IMR-90 (cell line): ENCODE measurements at regions of chr19 and their contacts with region 1.

Region 1: GRCh38 chr19:6737284-6738046 is at the start of gene GPR108:
- DNase-seq: peak; percentile 100
- ATAC-seq: peak; percentile 75
- H3K4me3 ChIP-seq: peak within 1 kb of the TSS; percentile 58
- H3K27ac ChIP-seq: peak within 1 kb of the TSS; percentile 89
- H3K4me1 ChIP-seq: peaks cover 13% of the 10 kb centered on the region
- H3K27me3 ChIP-seq: no peaks in the 10 kb centered on the region
- CTCF ChIP-seq: no peak
- POLR2A ChIP-seq: no peak
- RAD21 ChIP-seq: no peak
- total RNA-seq, gene GPR108: 17.5 and 28.0 TPM in 2 replicates

Region 2: GRCh38 chr19:6372594-6373095 is 364.8 kb before region 1 on chr19 and contains the start of gene ALKBH7:
- CTCF ChIA-PET with region 1: no interaction called
- POLR2A ChIA-PET with region 1: no interaction called
- dilution Hi-C with region 1: no loop called
- in situ Hi-C with region 1: no loop called
- intact Hi-C with region 1: loop called (anchors 2 kb)
- DNase-seq: peak; percentile 100
- ATAC-seq: peak; percentile 83
- H3K4me3 ChIP-seq: peak within 1 kb of the TSS; percentile 79
- H3K27ac ChIP-seq: peak within 1 kb of the TSS; percentile 79
- H3K4me1 ChIP-seq: peaks cover 6% of the 10 kb centered on the region
- H3K27me3 ChIP-seq: no peaks in the 10 kb centered on the region
- CTCF ChIP-seq: no peak
- POLR2A ChIP-seq: peak; percentile 67; the same call in 1 of the 2 replicates
- RAD21 ChIP-seq: no peak
- total RNA-seq, gene ALKBH7: 9.3 and 10.3 TPM in 2 replicates

Region 3: DNA sequence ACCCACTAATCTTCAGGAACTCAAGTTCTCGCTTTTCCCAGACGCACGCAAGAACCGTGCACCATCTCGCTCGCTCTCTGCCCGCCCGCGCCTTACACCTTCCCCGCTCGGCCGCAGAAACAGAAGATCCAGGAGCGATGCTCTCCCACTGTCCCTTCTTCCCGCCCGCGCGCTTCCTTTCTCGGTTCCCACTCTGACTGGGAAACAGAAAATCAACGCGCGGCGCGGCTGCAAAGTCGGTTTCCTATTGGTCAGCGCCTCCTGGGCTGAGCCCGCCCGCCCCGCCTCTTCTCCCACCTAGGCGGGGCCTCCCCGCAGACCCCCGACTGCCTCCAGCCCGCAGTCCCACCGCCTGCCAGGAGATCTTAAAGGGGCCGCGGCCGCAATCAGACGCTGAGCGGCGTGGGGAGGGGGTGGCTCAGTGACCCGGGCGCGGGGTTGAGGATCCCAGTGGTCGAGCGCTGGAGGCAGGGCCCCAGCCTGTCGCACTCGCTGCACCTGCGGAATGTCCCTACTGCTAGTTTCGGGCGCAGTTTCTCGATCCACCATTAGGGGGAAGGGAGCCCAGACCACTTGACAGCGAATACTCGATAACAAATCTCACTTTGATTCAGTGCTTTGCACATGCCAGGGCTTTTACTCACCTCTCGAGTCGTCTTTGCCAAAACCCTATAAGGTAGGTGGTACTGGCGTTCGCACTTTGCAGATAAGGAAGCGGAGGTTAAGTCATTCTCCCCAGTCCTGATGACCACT is 277.2 kb before region 1 on chr19:
- CTCF ChIA-PET with region 1: no interaction called
- POLR2A ChIA-PET with region 1: no interaction called
- dilution Hi-C with region 1: no loop called
- in situ Hi-C with region 1: no loop called
- intact Hi-C with region 1: loop called (anchors 1 kb)
- DNase-seq: peak; percentile 97
- ATAC-seq: peak; percentile 92
- H3K4me3 ChIP-seq: peak overlapping the region; percentile 61
- H3K27ac ChIP-seq: peak overlapping the region; percentile 4; the same call in 1 of the 2 replicates
- H3K4me1 ChIP-seq: peaks cover 3% of the 10 kb centered on the region; the same call in 1 of the 2 replicates
- H3K27me3 ChIP-seq: peaks cover 17% of the 10 kb centered on the region
- CTCF ChIP-seq: peak; percentile 46
- POLR2A ChIP-seq: no peak
- RAD21 ChIP-seq: no peak

Region 4: GRCh38 chr19:6530386-6531161 is 206.9 kb before region 1 on chr19 and contains the start of gene TNFSF9:
- CTCF ChIA-PET with region 1: no interaction called
- POLR2A ChIA-PET with region 1: no interaction called
- dilution Hi-C with region 1: no loop called
- in situ Hi-C with region 1: no loop called
- intact Hi-C with region 1: loop called (anchors 5 kb)
- DNase-seq: peak; percentile 59
- ATAC-seq: peak; percentile 99
- H3K4me3 ChIP-seq: peak within 1 kb of the TSS; percentile 58
- H3K27ac ChIP-seq: peak within 1 kb of the TSS; percentile 28; the same call in 1 of the 2 replicates
- H3K4me1 ChIP-seq: no peaks in the 10 kb centered on the region
- H3K27me3 ChIP-seq: peaks cover 15% of the 10 kb centered on the region; the same call in 1 of the 2 replicates
- CTCF ChIP-seq: no peak
- POLR2A ChIP-seq: no peak
- RAD21 ChIP-seq: no peak
- total RNA-seq, gene TNFSF9: not detected in 2 replicates

Region 5: DNA sequence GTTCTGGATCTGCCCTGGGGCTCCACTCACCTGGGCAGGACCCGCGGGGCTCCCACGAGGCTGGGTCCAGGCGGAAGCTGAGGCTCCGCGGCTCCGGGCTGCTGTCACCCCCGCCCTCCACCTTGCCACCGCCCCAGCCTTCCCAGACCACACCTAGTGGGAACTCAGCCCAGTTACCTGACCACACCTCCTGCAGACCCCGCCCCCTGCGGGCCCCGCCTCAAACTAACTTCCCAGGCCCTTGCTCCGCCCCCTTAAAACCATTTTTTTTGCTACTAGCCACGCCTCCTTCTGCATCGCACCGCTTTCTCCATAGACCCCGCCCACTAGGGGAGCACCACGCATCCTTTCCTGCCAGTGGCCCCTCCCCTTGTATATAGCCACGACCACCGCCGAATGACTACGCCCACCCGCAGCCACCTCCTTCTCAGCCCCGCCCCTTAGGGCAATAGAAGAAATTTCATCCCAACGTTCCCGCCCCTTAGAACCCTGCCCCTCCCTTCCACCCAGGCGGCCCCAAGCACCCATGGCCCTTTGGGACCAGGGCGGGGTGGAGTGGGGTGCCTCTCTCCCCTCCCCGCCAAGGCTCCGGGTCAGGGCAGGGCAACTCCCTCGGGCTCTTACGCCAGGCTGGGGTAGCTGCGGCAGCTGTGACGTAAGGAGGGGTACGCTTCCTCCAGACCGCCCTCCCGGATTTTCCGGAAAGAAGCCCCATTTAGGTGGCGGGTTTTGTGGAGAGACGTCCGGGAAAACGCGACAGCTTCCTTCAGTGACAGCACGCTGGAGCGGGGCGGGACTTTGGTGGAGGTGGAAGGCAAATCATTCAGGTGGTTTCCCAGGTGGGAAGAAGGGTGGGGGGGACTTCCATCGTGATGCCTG is 30.1 kb after region 1 on chr19 and contains the start of gene SH2D3A:
- CTCF ChIA-PET with region 1: no interaction called
- POLR2A ChIA-PET with region 1: no interaction called
- dilution Hi-C with region 1: no loop called
- in situ Hi-C with region 1: no loop called
- intact Hi-C with region 1: loop called (anchors 1 kb)
- DNase-seq: peak; percentile 15
- ATAC-seq: peak; percentile 65
- H3K4me3 ChIP-seq: no peak within 1 kb of the TSS
- H3K27ac ChIP-seq: no peak within 1 kb of the TSS
- H3K4me1 ChIP-seq: no peaks in the 10 kb centered on the region
- H3K27me3 ChIP-seq: no peaks in the 10 kb centered on the region; the same call in 1 of the 2 replicates
- CTCF ChIP-seq: no peak
- POLR2A ChIP-seq: no peak
- RAD21 ChIP-seq: no peak
- total RNA-seq, gene SH2D3A: under 0.01 TPM in 1 of 2 replicates, not detected in the other

Region 6: DNA sequence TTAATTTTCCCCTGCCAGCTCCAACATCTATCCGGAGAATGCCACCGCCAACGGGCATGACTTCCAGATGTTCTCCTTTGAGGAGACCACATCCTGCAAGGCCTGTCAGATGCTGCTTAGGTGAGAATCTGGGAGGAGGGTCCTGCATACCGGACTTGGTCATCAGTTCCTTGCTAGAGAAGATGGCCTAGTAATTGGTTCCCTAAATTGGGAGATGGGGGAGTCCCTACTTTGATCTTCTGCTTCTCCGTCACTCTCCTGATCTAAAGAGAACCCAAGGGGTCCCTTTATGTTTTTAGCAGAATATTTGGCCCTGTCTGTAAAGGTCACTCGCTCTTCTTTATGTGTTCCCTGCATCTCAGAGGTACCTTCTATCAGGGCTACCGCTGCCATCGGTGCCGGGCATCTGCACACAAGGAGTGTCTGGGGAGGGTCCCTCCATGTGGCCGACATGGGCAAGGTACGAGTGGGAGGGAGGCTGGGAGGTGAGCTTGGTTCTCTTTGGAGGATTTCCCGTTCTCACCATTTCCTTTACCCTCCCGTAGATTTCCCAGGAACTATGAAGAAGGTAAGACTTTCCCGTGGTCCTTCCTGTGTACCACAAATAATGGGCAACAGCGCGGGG is 95.8 kb after region 1 on chr19:
- CTCF ChIA-PET with region 1: no interaction called
- POLR2A ChIA-PET with region 1: no interaction called
- dilution Hi-C with region 1: no loop called
- in situ Hi-C with region 1: no loop called
- intact Hi-C with region 1: no loop called
- DNase-seq: no peak
- ATAC-seq: no peak
- H3K4me3 ChIP-seq: no peak overlapping the region
- H3K27ac ChIP-seq: no peak overlapping the region
- H3K4me1 ChIP-seq: no peaks in the 10 kb centered on the region
- H3K27me3 ChIP-seq: no peaks in the 10 kb centered on the region
- CTCF ChIP-seq: no peak
- POLR2A ChIP-seq: no peak
- RAD21 ChIP-seq: no peak

Region 7: DNA sequence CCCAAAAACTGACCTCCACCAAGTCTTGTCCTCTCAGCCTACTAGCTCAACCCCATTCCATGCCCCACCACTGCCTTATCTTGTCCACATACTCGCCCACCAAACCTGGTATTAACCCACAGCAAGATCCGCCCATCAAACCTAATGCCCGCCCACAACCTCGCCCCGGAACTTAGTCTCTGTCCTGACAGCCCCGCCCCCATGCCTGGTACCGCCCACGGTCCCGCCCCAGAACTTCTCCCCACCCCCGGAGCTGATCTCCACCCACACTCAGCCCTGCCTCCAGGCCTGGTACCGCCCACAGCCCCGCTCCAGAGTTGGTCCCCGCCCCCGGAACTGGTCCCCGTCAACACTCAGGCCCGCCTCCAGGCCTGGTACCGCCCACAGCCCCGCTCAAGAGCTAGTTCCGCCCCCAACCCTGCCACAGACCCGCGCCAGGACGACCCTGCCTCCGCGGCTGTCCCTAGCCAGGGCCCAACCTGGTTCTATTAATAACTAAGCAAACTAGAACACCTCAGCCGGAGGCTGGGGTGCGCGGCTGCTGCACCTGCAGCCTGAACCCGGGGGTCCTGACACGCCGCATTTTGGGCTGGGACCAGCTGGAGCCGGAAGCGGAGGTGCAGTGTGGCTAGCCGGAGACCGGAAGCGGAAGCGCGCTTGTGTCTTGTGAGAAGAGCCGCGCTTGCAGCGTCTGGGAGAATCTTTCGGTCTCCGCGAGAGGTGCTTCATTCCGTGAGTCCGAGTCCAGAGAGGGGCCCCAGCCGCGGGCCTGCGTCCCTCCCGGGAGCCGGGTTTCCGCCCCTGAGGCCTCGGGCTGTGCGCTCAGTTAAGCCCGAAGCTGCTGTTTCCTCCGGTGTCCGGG is 331.8 kb after region 1 on chr19 and contains the start of gene ZNF557:
- CTCF ChIA-PET with region 1: no interaction called
- POLR2A ChIA-PET with region 1: no interaction called
- dilution Hi-C with region 1: no loop called
- in situ Hi-C with region 1: no loop called
- intact Hi-C with region 1: loop called (anchors 10 kb)
- DNase-seq: peak; percentile 95
- ATAC-seq: peak; percentile 99
- H3K4me3 ChIP-seq: peak within 1 kb of the TSS; percentile 54
- H3K27ac ChIP-seq: peak within 1 kb of the TSS; percentile 72
- H3K4me1 ChIP-seq: no peaks in the 10 kb centered on the region
- H3K27me3 ChIP-seq: no peaks in the 10 kb centered on the region
- CTCF ChIP-seq: no peak
- POLR2A ChIP-seq: peak; percentile 76
- RAD21 ChIP-seq: no peak
- total RNA-seq, gene ZNF557: 16.9 and 21.1 TPM in 2 replicates